CD8-positive, alpha-beta T cell (primary cell): ENCODE measurements at regions of chr17 and their contacts with region 1.

Region 1: GRCh38 chr17:2786176-2786881 is 9.9 kb upstream of the RAP1GAP2 start:
- DNase-seq: peak; percentile 80 to 94 (median 91)
- ATAC-seq: peak; percentile 98
- H3K4me3 ChIP-seq: no peak overlapping the region
- H3K4me3 Mint-ChIP-seq: no peak overlapping the region
- H3K27ac ChIP-seq: no peak overlapping the region
- H3K27ac Mint-ChIP-seq: no peak overlapping the region
- H3K4me1 ChIP-seq: peaks cover 18% of the 10 kb centered on the region
- H3K4me1 Mint-ChIP-seq: peaks cover 10% of the 10 kb centered on the region
- H3K27me3 ChIP-seq: no peaks in the 10 kb centered on the region
- H3K27me3 Mint-ChIP-seq: peaks cover 2% of the 10 kb centered on the region
- CTCF ChIP-seq: peak; percentile 88

Region 2: GRCh38 chr17:2796164-2797125 is 10.1 kb after region 1 on chr17 and contains the start of gene RAP1GAP2:
- CTCF ChIA-PET with region 1: interaction called, 24 read pairs
- POLR2A ChIA-PET with region 1: interaction called, 9 read pairs
- intact Hi-C with region 1: no loop called
- DNase-seq: peak; percentile 44 to 92 (median 78)
- ATAC-seq: peak; percentile 81
- H3K4me3 ChIP-seq: peak within 1 kb of the TSS; percentile 56 to 82
- H3K4me3 Mint-ChIP-seq: peak within 1 kb of the TSS; percentile 86
- H3K27ac ChIP-seq: peak within 1 kb of the TSS; percentile 6 to 30
- H3K27ac Mint-ChIP-seq: peak within 1 kb of the TSS; percentile 78
- H3K4me1 ChIP-seq: peaks cover 74% of the 10 kb centered on the region
- H3K4me1 Mint-ChIP-seq: peaks cover 73% of the 10 kb centered on the region
- H3K27me3 ChIP-seq: no peaks in the 10 kb centered on the region
- H3K27me3 Mint-ChIP-seq: peaks cover 5% of the 10 kb centered on the region
- CTCF ChIP-seq: no peak
- total RNA-seq, gene RAP1GAP2: 18.9 to 19.9 TPM

Region 3: GRCh38 chr17:2828397-2829038 is 42.2 kb after region 1 on chr17:
- CTCF ChIA-PET with region 1: interaction called, 45 read pairs
- POLR2A ChIA-PET with region 1: no interaction called
- intact Hi-C with region 1: loop called (anchors 1 to 2 kb)
- DNase-seq: peak; percentile 52 to 87 (median 79)
- ATAC-seq: peak; percentile 87
- H3K4me3 ChIP-seq: peak overlapping the region in 1 of 2 experiments; percentile 37
- H3K4me3 Mint-ChIP-seq: peak overlapping the region; percentile 22
- H3K27ac ChIP-seq: no peak overlapping the region
- H3K27ac Mint-ChIP-seq: no peak overlapping the region
- H3K4me1 ChIP-seq: peaks cover 9% of the 10 kb centered on the region
- H3K4me1 Mint-ChIP-seq: peaks cover 25% of the 10 kb centered on the region
- H3K27me3 ChIP-seq: no peaks in the 10 kb centered on the region
- H3K27me3 Mint-ChIP-seq: peaks cover 19% of the 10 kb centered on the region
- CTCF ChIP-seq: peak; percentile 95

Region 4: GRCh38 chr17:2929881-2930533 is 143.7 kb after region 1 on chr17:
- CTCF ChIA-PET with region 1: interaction called, 4 read pairs
- POLR2A ChIA-PET with region 1: no interaction called
- intact Hi-C with region 1: loop called (anchors 1 to 2 kb)
- DNase-seq: peak in 5 of 9 experiments; percentile 15 to 62 (median 35)
- ATAC-seq: no peak
- H3K4me3 ChIP-seq: no peak overlapping the region
- H3K4me3 Mint-ChIP-seq: no peak overlapping the region
- H3K27ac ChIP-seq: no peak overlapping the region
- H3K27ac Mint-ChIP-seq: no peak overlapping the region
- H3K4me1 ChIP-seq: peaks cover 7% of the 10 kb centered on the region
- H3K4me1 Mint-ChIP-seq: peaks cover 14% of the 10 kb centered on the region
- H3K27me3 ChIP-seq: no peaks in the 10 kb centered on the region
- H3K27me3 Mint-ChIP-seq: no peaks in the 10 kb centered on the region
- CTCF ChIP-seq: peak; percentile 48